ENCODE measurements at regions of chr4 and their contacts with region 1.

Region 1: GRCh38 chr4:108155373-108155772 is 13.4 kb downstream of the LEF1 start:
- DNase-seq: peak in 5 of 9 experiments; percentile 43 to 81 (median 58)
- ATAC-seq: peak; percentile 66
- H3K4me3 ChIP-seq: peak overlapping the region in 1 of 2 experiments; percentile 29
- H3K4me3 Mint-ChIP-seq: peak overlapping the region; percentile 66
- H3K27ac ChIP-seq: peak overlapping the region in 1 of 2 experiments; percentile 21
- H3K27ac Mint-ChIP-seq: peak overlapping the region; percentile 88
- H3K4me1 ChIP-seq: peaks cover 85% of the 10 kb centered on the region
- H3K4me1 Mint-ChIP-seq: peaks cover 84% of the 10 kb centered on the region
- H3K27me3 ChIP-seq: peaks cover 0 to 4% of the 10 kb centered on the region in 2 experiments
- H3K27me3 Mint-ChIP-seq: no peaks in the 10 kb centered on the region
- CTCF ChIP-seq: peak; percentile 35

Region 2: DNA sequence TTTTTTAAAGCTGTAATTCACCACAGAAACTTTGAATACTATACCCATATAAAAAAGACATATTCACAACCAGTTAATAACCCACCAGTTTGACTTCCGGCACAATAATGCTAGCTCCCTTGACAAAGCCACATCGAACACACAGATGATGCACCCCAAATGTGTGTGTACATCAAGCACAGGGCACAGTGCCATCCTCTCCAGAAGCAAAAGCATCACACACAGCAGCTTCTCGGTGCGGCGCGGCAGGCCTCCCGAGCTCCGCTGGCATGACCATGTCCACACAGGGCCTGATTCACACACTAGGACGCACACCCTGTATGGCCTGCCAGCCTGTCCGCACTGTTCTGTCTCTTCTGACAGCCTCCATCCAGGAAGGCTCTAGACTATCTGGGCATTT is 74.6 kb before region 1 on chr4:
- CTCF ChIA-PET with region 1: interaction called, 6 read pairs
- POLR2A ChIA-PET with region 1: interaction called, 14 read pairs
- intact Hi-C with region 1: loop called in 1 of 2 experiments (anchors 5 kb)
- DNase-seq: peak; percentile 23 to 86 (median 67)
- ATAC-seq: peak; percentile 85
- H3K4me3 ChIP-seq: peak overlapping the region; percentile 3 to 6
- H3K4me3 Mint-ChIP-seq: peak overlapping the region; percentile 72
- H3K27ac ChIP-seq: peak overlapping the region; percentile 39 to 60
- H3K27ac Mint-ChIP-seq: peak overlapping the region; percentile 99
- H3K4me1 ChIP-seq: peaks cover 75% of the 10 kb centered on the region
- H3K4me1 Mint-ChIP-seq: peaks cover 67% of the 10 kb centered on the region
- H3K27me3 ChIP-seq: no peaks in the 10 kb centered on the region
- H3K27me3 Mint-ChIP-seq: no peaks in the 10 kb centered on the region
- CTCF ChIP-seq: no peak

Region 3: GRCh38 chr4:108141213-108141950 is 14.0 kb before region 1 on chr4:
- CTCF ChIA-PET with region 1: interaction called, 5 read pairs
- POLR2A ChIA-PET with region 1: interaction called, 17 read pairs
- intact Hi-C with region 1: loop called in 1 of 2 experiments (anchors 1 kb)
- DNase-seq: peak in 3 of 9 experiments; percentile 33 to 45 (median 38)
- ATAC-seq: peak; percentile 6
- H3K4me3 ChIP-seq: peak overlapping the region in 1 of 2 experiments; percentile 10
- H3K4me3 Mint-ChIP-seq: peak overlapping the region; percentile 73
- H3K27ac ChIP-seq: peak overlapping the region; percentile 7 to 9
- H3K27ac Mint-ChIP-seq: peak overlapping the region; percentile 94
- H3K4me1 ChIP-seq: peaks cover 99% of the 10 kb centered on the region
- H3K4me1 Mint-ChIP-seq: peaks cover 90% of the 10 kb centered on the region
- H3K27me3 ChIP-seq: no peaks in the 10 kb centered on the region
- H3K27me3 Mint-ChIP-seq: no peaks in the 10 kb centered on the region
- CTCF ChIP-seq: no peak

Region 4: GRCh38 chr4:108166441-108167315 is 11.3 kb after region 1 on chr4:
- CTCF ChIA-PET with region 1: interaction called, 5 read pairs
- POLR2A ChIA-PET with region 1: interaction called, 12 read pairs
- intact Hi-C with region 1: loop called (anchors 1 to 2 kb)
- DNase-seq: peak; percentile 16 to 78 (median 58)
- ATAC-seq: peak; percentile 15
- H3K4me3 ChIP-seq: peak overlapping the region; percentile 73 to 78
- H3K4me3 Mint-ChIP-seq: peak overlapping the region; percentile 95
- H3K27ac ChIP-seq: peak overlapping the region; percentile 42 to 59
- H3K27ac Mint-ChIP-seq: peak overlapping the region; percentile 97
- H3K4me1 ChIP-seq: peaks cover 22% of the 10 kb centered on the region
- H3K4me1 Mint-ChIP-seq: peaks cover 47% of the 10 kb centered on the region
- H3K27me3 ChIP-seq: peaks cover 0 to 32% of the 10 kb centered on the region in 2 experiments
- H3K27me3 Mint-ChIP-seq: peaks cover 3% of the 10 kb centered on the region
- CTCF ChIP-seq: no peak

Region 5: GRCh38 chr4:108398316-108398715 is 242.9 kb after region 1 on chr4:
- CTCF ChIA-PET with region 1: no interaction called
- POLR2A ChIA-PET with region 1: no interaction called
- intact Hi-C with region 1: no loop called
- DNase-seq: peak in 2 of 9 experiments; percentile 11 to 14
- ATAC-seq: no peak
- H3K4me3 ChIP-seq: no peak overlapping the region
- H3K4me3 Mint-ChIP-seq: no peak overlapping the region
- H3K27ac ChIP-seq: no peak overlapping the region
- H3K27ac Mint-ChIP-seq: no peak overlapping the region
- H3K4me1 ChIP-seq: peaks cover 3% of the 10 kb centered on the region
- H3K4me1 Mint-ChIP-seq: peaks cover 10% of the 10 kb centered on the region
- H3K27me3 ChIP-seq: no peaks in the 10 kb centered on the region
- H3K27me3 Mint-ChIP-seq: no peaks in the 10 kb centered on the region
- CTCF ChIP-seq: no peak

Region 6: GRCh38 chr4:108473221-108473620 is 317.8 kb after region 1 on chr4:
- CTCF ChIA-PET with region 1: interaction called, 3 read pairs
- POLR2A ChIA-PET with region 1: no interaction called
- intact Hi-C with region 1: loop called in 1 of 2 experiments (anchors 5 kb)
- DNase-seq: peak in 1 of 9 experiments; percentile 20
- ATAC-seq: no peak
- H3K4me3 ChIP-seq: no peak overlapping the region
- H3K4me3 Mint-ChIP-seq: no peak overlapping the region
- H3K27ac ChIP-seq: no peak overlapping the region
- H3K27ac Mint-ChIP-seq: no peak overlapping the region
- H3K4me1 ChIP-seq: peaks cover 11% of the 10 kb centered on the region
- H3K4me1 Mint-ChIP-seq: peaks cover 22% of the 10 kb centered on the region
- H3K27me3 ChIP-seq: no peaks in the 10 kb centered on the region
- H3K27me3 Mint-ChIP-seq: no peaks in the 10 kb centered on the region
- CTCF ChIP-seq: no peak

Region 7: GRCh38 chr4:108512615-108513505 is 357.5 kb after region 1 on chr4:
- CTCF ChIA-PET with region 1: interaction called, 3 read pairs
- POLR2A ChIA-PET with region 1: no interaction called
- intact Hi-C with region 1: loop called in 1 of 2 experiments (anchors 5 kb)
- DNase-seq: peak in 8 of 9 experiments; percentile 18 to 71 (median 54)
- ATAC-seq: peak; percentile 93
- H3K4me3 ChIP-seq: peak overlapping the region in 1 of 2 experiments; percentile 17
- H3K4me3 Mint-ChIP-seq: peak overlapping the region; percentile 82
- H3K27ac ChIP-seq: no peak overlapping the region
- H3K27ac Mint-ChIP-seq: peak overlapping the region; percentile 57
- H3K4me1 ChIP-seq: peaks cover 16% of the 10 kb centered on the region
- H3K4me1 Mint-ChIP-seq: peaks cover 29% of the 10 kb centered on the region
- H3K27me3 ChIP-seq: no peaks in the 10 kb centered on the region
- H3K27me3 Mint-ChIP-seq: no peaks in the 10 kb centered on the region
- CTCF ChIP-seq: peak; percentile 53

Region 8: GRCh38 chr4:109424093-109424841 is 1268.9 kb after region 1 on chr4:
- CTCF ChIA-PET with region 1: no interaction called
- POLR2A ChIA-PET with region 1: no interaction called
- intact Hi-C with region 1: no loop called
- DNase-seq: no peak
- ATAC-seq: no peak
- H3K4me3 ChIP-seq: no peak overlapping the region
- H3K4me3 Mint-ChIP-seq: no peak overlapping the region
- H3K27ac ChIP-seq: no peak overlapping the region
- H3K27ac Mint-ChIP-seq: no peak overlapping the region
- H3K4me1 ChIP-seq: no peaks in the 10 kb centered on the region
- H3K4me1 Mint-ChIP-seq: peaks cover 2% of the 10 kb centered on the region
- H3K27me3 ChIP-seq: no peaks in the 10 kb centered on the region
- H3K27me3 Mint-ChIP-seq: no peaks in the 10 kb centered on the region
- CTCF ChIP-seq: no peak